ENCODE measurements at regions of chr10 and their contacts with region 1.

Region 1: GRCh38 chr10:97498076-97498840 is at the start of gene MMS19:
- DNase-seq: peak; percentile 100
- H3K4me3 Mint-ChIP-seq: peak within 1 kb of the TSS; percentile 94
- H3K27ac Mint-ChIP-seq: peak within 1 kb of the TSS; percentile 100
- H3K4me1 Mint-ChIP-seq: peaks cover 38% of the 10 kb centered on the region
- H3K27me3 Mint-ChIP-seq: peaks cover 33% of the 10 kb centered on the region
- total RNA-seq, gene MMS19: 100 and 103 TPM in 2 replicates

Region 2: DNA sequence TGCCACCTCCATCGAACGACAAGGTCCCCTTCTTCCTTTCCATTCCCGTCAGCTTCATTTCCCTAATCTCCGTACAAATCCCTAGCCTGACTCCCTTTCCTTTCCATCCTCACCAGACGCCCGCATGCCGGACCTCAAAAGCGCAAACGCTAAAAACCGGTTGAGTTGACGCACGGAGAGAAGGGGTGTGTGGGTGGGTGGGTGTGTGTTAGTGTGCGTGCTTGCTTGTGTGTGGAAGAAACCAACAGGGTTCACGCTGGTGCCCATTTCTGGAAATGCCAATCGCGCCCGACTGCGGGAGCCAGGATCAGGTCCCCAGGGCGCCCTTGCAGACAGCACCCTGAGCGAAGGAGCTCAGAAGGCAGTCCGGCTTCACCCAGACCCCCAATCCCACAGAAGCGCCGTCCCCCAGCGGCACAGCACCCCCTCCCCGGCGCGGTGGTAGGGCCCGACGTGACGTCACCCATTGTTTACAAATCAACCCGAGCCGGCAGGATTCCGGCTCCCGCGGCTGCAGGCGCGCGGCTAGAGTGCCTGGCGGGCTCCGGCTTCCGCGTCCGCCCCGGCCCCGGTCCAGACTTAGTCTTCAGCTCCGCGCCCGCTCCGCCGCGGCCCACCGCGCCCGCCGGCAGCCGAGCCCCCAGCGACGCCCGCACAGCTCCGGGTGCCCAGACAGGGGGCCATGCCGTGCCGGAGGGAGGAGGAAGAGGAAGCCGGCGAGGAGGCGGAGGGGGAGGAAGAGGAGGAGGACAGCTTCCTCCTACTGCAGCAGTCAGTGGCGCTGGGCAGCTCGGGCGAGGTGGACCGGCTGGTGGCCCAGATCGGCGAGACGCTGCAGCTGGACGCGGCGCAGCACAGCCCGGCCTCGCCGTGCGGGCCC is 179.2 kb before region 1 on chr10 and contains the start of gene FRAT1:
- intact Hi-C with region 1: loop called (anchors 5 kb)
- DNase-seq: peak; percentile 97
- H3K4me3 Mint-ChIP-seq: peak within 1 kb of the TSS; percentile 92
- H3K27ac Mint-ChIP-seq: peak within 1 kb of the TSS; percentile 99
- H3K4me1 Mint-ChIP-seq: peaks cover 23% of the 10 kb centered on the region
- H3K27me3 Mint-ChIP-seq: peaks cover 12% of the 10 kb centered on the region
- total RNA-seq, gene FRAT1: 2.0 and 2.5 TPM in 2 replicates

Region 3: GRCh38 chr10:97425964-97426775 is 72.1 kb before region 1 on chr10 and contains the start of gene PGAM1:
- intact Hi-C with region 1: loop called (anchors 1 kb)
- DNase-seq: peak; percentile 99
- H3K4me3 Mint-ChIP-seq: peak within 1 kb of the TSS; percentile 94
- H3K27ac Mint-ChIP-seq: peak within 1 kb of the TSS; percentile 97
- H3K4me1 Mint-ChIP-seq: peaks cover 46% of the 10 kb centered on the region
- H3K27me3 Mint-ChIP-seq: peaks cover 2% of the 10 kb centered on the region
- total RNA-seq, gene PGAM1: 1,086 and 1,108 TPM in 2 replicates

Region 4: GRCh38 chr10:97543025-97543575 is 44.8 kb after region 1 on chr10:
- intact Hi-C with region 1: loop called (anchors 2 kb)
- DNase-seq: peak; percentile 72
- H3K4me3 Mint-ChIP-seq: peak overlapping the region; percentile 16
- H3K27ac Mint-ChIP-seq: peak overlapping the region; percentile 71
- H3K4me1 Mint-ChIP-seq: peaks cover 23% of the 10 kb centered on the region
- H3K27me3 Mint-ChIP-seq: no peaks in the 10 kb centered on the region

Region 5: DNA sequence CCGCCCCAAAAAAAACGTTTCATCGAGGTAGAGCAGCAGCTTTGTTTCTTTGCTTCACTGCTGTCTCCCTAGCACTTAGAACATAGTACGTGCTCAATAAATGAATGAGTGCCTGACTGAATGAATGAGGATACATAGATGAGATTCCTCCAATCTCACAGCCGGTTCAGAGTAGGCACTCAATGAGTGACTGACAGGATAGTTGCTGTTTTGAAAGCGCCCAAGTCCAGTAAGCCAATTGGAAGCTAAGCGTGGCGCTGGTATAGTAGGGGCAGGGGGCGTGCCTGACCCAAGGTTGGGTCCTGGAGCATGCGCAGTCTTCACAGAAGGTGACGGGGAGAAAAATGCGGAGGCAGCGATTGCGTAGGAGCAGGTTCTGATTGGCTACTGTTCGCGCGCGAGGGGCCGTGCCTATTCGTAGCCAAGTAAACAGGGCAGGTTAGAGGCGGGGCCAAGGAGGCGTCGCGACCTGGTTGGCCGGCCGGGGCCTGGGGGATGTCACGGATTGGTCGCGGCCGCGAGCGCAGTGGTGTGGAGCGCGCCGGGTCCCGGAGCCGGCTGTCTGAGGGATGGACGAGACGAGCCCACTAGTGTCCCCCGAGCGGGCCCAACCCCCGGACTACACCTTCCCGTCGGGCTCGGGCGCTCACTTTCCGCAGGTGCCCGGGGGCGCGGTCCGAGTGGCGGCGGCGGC is 142.1 kb after region 1 on chr10 and contains the start of gene PI4K2A:
- intact Hi-C with region 1: loop called (anchors 2 kb)
- DNase-seq: peak; percentile 100
- H3K4me3 Mint-ChIP-seq: peak within 1 kb of the TSS; percentile 95
- H3K27ac Mint-ChIP-seq: peak within 1 kb of the TSS; percentile 90
- H3K4me1 Mint-ChIP-seq: peaks cover 23% of the 10 kb centered on the region
- H3K27me3 Mint-ChIP-seq: peaks cover 3% of the 10 kb centered on the region
- total RNA-seq, gene PI4K2A: 17.8 TPM in 2 replicates

Region 6: DNA sequence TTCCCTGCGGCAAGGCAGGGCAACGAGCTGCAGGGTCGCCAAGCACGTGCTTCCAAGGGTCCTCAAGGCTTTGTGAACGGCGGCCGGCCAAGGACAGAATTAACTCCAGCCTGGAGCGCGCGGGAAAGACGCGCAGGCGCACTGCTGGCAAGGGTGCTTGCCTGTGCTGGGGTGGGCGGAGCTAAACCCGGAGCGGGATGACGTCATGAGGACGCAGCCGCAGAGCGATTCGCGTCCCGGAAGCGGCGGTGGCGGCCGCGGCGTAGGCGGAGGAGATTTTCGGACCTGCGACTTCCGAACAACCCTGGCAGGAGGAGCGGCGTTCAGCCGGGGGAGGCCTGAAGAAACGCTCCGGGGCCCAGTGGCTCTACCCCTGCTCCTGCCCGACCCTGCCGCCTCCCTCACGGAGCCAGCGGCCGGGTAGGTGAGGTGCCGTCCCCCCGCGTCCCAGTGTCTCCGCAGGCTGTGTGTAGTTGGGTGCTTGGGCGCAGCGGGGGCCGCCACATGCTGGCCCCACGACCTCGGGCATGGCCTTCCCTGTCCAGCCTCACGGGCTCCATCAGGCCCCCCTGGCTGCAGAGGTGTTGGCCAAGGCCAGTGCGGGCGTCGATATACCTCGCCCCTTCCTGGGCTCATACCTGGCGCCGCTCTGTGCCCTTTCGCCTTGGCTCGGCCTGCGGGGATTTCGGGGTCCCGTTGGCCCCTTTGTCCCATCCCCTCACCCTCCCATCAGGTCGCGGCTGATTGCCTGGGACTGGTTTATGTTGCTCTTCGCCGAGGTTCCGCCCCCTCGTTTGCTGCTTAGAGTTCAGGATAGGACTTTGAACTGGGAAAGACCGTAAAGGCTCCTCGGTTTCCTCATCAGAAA is 238.9 kb after region 1 on chr10 and contains the start of gene ZFYVE27:
- intact Hi-C with region 1: loop called (anchors 1 kb)
- DNase-seq: peak; percentile 99
- H3K4me3 Mint-ChIP-seq: peak within 1 kb of the TSS; percentile 96
- H3K27ac Mint-ChIP-seq: peak within 1 kb of the TSS; percentile 94
- H3K4me1 Mint-ChIP-seq: peaks cover 38% of the 10 kb centered on the region
- H3K27me3 Mint-ChIP-seq: peaks cover 5% of the 10 kb centered on the region
- total RNA-seq, gene ZFYVE27: 38.1 and 42.2 TPM in 2 replicates

Region 7: GRCh38 chr10:98269072-98269912 is 771.0 kb after region 1 on chr10:
- intact Hi-C with region 1: no loop called
- DNase-seq: no peak
- H3K4me3 Mint-ChIP-seq: peak overlapping the region; percentile 62
- H3K27ac Mint-ChIP-seq: no peak overlapping the region
- H3K4me1 Mint-ChIP-seq: no peaks in the 10 kb centered on the region
- H3K27me3 Mint-ChIP-seq: peaks cover 52% of the 10 kb centered on the region